Heart left ventricle (tissue), 16 donors: ENCODE measurements at regions of chr21 and their contacts with region 1.

Region 1: DNA sequence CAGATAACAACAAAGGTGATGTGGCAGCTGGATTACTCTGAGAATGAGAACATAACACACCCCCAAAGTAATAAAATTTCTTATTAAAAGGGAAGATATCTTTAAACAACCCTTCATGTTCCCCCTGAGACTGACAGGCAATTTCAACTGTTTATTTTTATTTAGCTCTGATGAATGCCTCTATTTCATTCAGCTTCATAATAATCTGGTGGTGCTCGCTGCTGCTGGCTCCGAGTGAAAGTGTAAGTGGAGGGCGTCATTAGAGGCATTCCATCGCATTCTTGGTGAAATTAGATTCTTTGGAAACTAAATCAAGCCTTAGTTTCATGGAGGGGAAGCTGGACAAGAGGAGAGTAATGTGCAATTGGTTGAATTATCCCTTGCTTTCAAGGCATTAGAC is 128.9 kb downstream of the GRIK1 start:
- DNase-seq: no peak
- ATAC-seq: no peak
- H3K4me3 ChIP-seq: no peak overlapping the region
- H3K27ac ChIP-seq: no peak overlapping the region
- H3K4me1 ChIP-seq: no peaks in the 10 kb centered on the region
- H3K27me3 ChIP-seq: peaks cover 0 to 5% (median 0%) of the 10 kb centered on the region in 9 donors
- CTCF ChIP-seq: no peak
- POLR2A ChIP-seq: no peak

Region 2: GRCh38 chr21:29870814-29871213 is 59.9 kb after region 1 on chr21:
- intact Hi-C with region 1: loop called in 1 of 10 experiments (anchors 10 kb)
- DNase-seq: no peak
- ATAC-seq: no peak
- H3K4me3 ChIP-seq: no peak overlapping the region
- H3K27ac ChIP-seq: no peak overlapping the region
- H3K4me1 ChIP-seq: no peaks in the 10 kb centered on the region
- H3K27me3 ChIP-seq: peaks cover 0 to 4% (median 0%) of the 10 kb centered on the region in 9 donors
- CTCF ChIP-seq: no peak
- POLR2A ChIP-seq: no peak

Region 3: GRCh38 chr21:29904359-29905282 is 93.8 kb after region 1 on chr21:
- intact Hi-C with region 1: no loop called
- DNase-seq: no peak
- ATAC-seq: peak in 1 of 4 donors; percentile 24
- H3K4me3 ChIP-seq: no peak overlapping the region
- H3K27ac ChIP-seq: no peak overlapping the region
- H3K4me1 ChIP-seq: no peaks in the 10 kb centered on the region
- H3K27me3 ChIP-seq: no peaks in the 10 kb centered on the region
- CTCF ChIP-seq: no peak
- POLR2A ChIP-seq: no peak

Region 4: DNA sequence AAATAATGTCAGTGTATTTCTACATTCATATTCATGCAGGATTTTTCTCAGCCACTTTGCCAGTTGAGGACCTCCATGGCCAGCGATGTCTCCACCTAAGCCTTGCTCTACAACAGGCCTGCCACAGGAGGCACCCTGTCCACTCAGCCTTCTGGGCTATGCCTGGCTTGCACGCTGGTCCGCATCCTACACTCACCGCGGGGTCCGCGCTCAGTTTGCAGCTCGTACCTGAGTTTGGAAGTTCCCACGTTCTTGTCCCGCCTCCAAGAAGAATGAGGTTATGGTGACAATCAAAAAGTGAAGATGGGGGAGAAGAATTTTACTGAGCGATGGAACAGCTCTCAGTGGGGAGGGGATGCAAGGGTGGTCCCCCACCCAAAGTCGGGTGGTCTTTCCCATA is 222.6 kb after region 1 on chr21:
- intact Hi-C with region 1: no loop called
- DNase-seq: no peak
- ATAC-seq: no peak
- H3K4me3 ChIP-seq: no peak overlapping the region
- H3K27ac ChIP-seq: no peak overlapping the region
- H3K4me1 ChIP-seq: no peaks in the 10 kb centered on the region
- H3K27me3 ChIP-seq: no peaks in the 10 kb centered on the region
- CTCF ChIP-seq: no peak
- POLR2A ChIP-seq: no peak